ENCODE measurements at regions of chr20 and their contacts with region 1.

Region 1: DNA sequence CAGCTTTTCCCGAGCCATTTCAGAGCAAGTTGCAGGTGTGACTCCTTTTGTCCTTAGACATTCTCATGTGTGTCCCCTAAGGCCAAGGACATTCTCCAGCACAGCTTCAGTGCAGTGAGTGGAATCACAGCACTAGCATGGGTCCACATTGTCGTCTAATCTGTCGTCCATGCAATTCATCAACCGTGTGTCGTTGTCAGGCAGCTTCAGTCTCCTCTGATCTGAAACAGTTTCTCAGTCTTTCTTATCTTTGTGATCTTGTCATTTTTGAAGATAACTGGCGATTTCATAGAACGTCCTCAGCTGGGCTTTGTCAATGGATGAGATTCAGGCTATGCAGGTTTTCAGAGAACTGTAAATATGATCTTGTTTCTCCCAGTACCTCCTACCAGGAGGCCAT is 31.7 kb downstream of the CST2 start:
- DNase-seq: no peak
- ATAC-seq: no peak
- H3K4me3 Mint-ChIP-seq: no peak overlapping the region
- H3K27ac Mint-ChIP-seq: no peak overlapping the region
- H3K4me1 Mint-ChIP-seq: no peaks in the 10 kb centered on the region
- H3K27me3 Mint-ChIP-seq: peaks cover 7% of the 10 kb centered on the region

Region 2: DNA sequence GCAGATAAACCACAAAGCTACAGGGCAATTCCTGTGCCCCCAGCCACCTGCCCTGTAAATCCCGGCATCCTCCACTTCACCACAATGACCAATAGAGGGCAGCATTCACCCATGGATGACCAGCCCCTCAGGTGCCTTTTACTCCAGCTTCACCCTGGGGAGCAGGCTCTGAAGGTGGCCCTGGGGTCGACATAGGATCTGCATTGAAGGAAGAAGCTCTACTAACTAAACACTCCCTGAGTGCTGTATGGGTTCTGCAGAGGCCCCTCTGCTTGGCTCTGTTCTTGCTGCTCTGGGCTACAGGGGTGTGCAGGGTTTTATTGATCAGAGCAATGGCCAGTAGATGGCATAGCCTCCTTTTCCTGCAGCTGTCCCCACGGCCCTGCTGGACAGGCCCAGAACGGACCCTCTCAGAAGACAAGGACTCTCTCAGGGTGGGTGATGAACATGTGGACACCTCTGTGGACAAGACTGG is 126.3 kb before region 1 on chr20:
- CTCF ChIA-PET with region 1: no interaction called
- POLR2A ChIA-PET with region 1: no interaction called
- intact Hi-C with region 1: loop called in 1 of 2 experiments (anchors 10 kb)
- DNase-seq: peak; percentile 66
- ATAC-seq: peak; percentile 68
- H3K4me3 Mint-ChIP-seq: no peak overlapping the region
- H3K27ac Mint-ChIP-seq: no peak overlapping the region
- H3K4me1 Mint-ChIP-seq: no peaks in the 10 kb centered on the region
- H3K27me3 Mint-ChIP-seq: no peaks in the 10 kb centered on the region

Region 3: DNA sequence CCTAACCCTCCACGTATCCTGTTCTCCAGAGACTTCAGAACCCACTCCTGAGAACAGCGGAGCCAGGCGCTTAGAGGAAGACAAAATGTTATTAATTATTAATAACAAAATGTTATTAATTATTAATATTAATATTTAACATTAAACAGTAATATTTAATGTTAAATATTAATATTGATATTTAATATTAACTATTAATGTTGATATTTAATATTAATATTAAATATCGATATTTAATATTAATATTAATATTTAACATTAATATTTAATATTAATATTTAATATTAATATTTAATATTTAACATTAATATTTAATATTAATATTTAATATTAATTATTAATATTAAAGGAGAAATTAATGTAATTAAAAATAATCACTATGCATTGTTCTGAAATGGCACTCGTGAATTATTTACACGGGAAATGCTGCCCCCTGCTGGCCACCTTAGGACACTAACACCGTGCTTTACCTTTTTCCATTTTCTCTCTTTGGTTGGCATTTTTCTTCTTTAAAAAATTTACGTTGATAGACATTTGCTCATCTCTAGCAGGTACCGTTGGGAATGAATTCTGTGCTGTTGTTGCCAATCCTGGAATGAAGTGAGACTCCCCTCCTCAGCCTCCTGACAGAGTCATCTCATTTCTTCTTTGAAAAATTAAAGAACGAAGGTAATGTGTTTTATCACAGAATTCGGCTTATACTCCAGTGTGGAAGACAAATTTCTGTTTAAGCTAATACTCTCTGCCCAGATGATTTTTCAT is 201.2 kb after region 1 on chr20:
- CTCF ChIA-PET with region 1: no interaction called
- POLR2A ChIA-PET with region 1: no interaction called
- intact Hi-C with region 1: loop called in 1 of 2 experiments (anchors 5 kb)
- DNase-seq: peak; percentile 75
- ATAC-seq: no peak
- H3K4me3 Mint-ChIP-seq: no peak overlapping the region
- H3K27ac Mint-ChIP-seq: no peak overlapping the region
- H3K4me1 Mint-ChIP-seq: no peaks in the 10 kb centered on the region
- H3K27me3 Mint-ChIP-seq: no peaks in the 10 kb centered on the region